ENCODE measurements at regions of chr12 and their contacts with region 1.

Region 1: GRCh38 chr12:108618079-108618952 is 15.4 kb downstream of the SELPLG start:
- DNase-seq: peak; percentile 53 to 87 (median 78)
- ATAC-seq: peak; percentile 35
- H3K4me3 ChIP-seq: no peak overlapping the region
- H3K4me3 Mint-ChIP-seq: no peak overlapping the region
- H3K27ac ChIP-seq: peak overlapping the region in 1 of 2 experiments; percentile 71
- H3K27ac Mint-ChIP-seq: peak overlapping the region; percentile 95
- H3K4me1 ChIP-seq: peaks cover 45% of the 10 kb centered on the region
- H3K4me1 Mint-ChIP-seq: peaks cover 61% of the 10 kb centered on the region
- H3K27me3 ChIP-seq: no peaks in the 10 kb centered on the region
- H3K27me3 Mint-ChIP-seq: no peaks in the 10 kb centered on the region
- CTCF ChIP-seq: peak; percentile 96

Region 2: DNA sequence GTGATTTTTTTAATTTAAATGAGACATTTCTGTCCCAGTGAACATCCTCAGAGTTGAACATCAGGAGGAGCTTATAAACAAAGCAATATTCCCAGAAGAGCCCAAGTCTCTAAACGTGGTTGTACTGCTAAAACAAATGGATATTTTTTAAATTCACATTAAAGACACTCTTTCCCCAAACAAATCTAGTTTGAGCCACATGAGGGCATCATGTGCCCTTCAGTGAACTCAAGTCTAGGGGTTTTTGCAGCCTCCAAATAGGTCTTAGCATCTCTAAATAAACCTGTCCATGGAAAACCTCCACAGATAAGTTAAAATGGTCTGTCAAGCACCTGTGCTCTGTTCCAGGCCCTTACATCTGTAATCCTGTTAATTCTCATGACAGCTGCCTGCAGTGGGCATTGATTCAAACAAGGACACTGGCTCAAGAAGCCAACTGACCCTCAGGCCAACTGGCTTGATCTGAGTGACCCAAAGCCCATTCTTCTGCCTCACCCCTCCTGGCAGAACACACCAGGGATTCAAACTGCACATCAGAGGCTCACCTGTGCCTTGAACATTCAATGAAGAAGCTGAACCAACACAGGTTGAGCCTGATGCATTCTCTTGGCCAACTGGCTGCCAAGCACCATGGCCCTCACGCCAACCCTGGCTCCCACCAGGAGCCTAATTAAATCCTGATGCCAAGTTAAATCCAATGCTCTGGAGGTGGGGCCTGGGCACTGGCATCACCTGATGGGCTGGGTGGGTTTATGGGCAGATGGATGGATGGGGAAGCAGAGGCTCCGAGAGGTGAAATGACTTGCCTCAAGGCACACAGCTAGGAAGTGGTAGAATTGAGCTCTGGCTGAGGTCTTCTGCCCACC is 47.3 kb before region 1 on chr12:
- CTCF ChIA-PET with region 1: interaction called, 353 read pairs
- POLR2A ChIA-PET with region 1: interaction called, 105 read pairs
- intact Hi-C with region 1: loop called in 1 of 2 experiments (anchors 1 kb)
- DNase-seq: peak in 3 of 9 experiments; percentile 23 to 54 (median 47)
- ATAC-seq: no peak
- H3K4me3 ChIP-seq: no peak overlapping the region
- H3K4me3 Mint-ChIP-seq: no peak overlapping the region
- H3K27ac ChIP-seq: peak overlapping the region in 1 of 2 experiments; percentile 5
- H3K27ac Mint-ChIP-seq: peak overlapping the region; percentile 97
- H3K4me1 ChIP-seq: peaks cover 53% of the 10 kb centered on the region
- H3K4me1 Mint-ChIP-seq: peaks cover 89% of the 10 kb centered on the region
- H3K27me3 ChIP-seq: no peaks in the 10 kb centered on the region
- H3K27me3 Mint-ChIP-seq: no peaks in the 10 kb centered on the region
- CTCF ChIP-seq: no peak

Region 3: DNA sequence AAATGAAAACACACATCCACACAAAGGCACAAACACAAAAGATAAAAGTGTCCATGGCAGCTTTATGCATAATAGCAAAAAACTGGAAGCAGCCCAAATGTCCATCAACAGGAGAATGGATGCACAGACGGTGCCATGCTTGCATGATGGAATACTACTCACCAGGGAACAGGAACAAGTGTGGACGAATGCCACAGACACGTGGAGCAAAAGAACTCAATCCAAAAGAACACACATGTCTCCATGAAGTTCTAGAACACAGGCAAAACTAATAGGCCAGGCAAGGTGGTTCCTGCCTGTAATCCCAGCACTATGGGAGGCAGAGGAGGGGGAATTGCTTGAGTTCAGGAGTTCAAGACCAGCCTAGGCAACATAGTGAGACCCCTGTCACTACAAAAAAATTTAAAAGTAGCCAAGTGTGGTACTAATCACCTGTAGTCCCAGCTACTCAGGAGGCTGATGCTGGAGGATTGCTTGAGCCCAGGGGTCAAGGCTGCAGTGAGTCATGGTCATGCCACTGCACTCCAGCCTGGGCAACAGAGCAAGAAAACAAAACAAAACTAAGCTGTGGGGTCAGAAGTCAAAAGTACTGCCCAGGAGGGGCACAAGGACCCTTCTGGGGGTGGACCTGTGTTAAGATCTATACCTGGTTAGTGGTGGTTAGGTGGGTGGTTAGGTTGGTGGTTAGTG is 13.2 kb before region 1 on chr12:
- CTCF ChIA-PET with region 1: interaction called, 35 read pairs
- POLR2A ChIA-PET with region 1: no interaction called
- intact Hi-C with region 1: no loop called
- DNase-seq: no peak
- ATAC-seq: no peak
- H3K4me3 ChIP-seq: no peak overlapping the region
- H3K4me3 Mint-ChIP-seq: no peak overlapping the region
- H3K27ac ChIP-seq: no peak overlapping the region
- H3K27ac Mint-ChIP-seq: no peak overlapping the region
- H3K4me1 ChIP-seq: no peaks in the 10 kb centered on the region
- H3K4me1 Mint-ChIP-seq: no peaks in the 10 kb centered on the region
- H3K27me3 ChIP-seq: no peaks in the 10 kb centered on the region
- H3K27me3 Mint-ChIP-seq: no peaks in the 10 kb centered on the region
- CTCF ChIP-seq: no peak

Region 4: DNA sequence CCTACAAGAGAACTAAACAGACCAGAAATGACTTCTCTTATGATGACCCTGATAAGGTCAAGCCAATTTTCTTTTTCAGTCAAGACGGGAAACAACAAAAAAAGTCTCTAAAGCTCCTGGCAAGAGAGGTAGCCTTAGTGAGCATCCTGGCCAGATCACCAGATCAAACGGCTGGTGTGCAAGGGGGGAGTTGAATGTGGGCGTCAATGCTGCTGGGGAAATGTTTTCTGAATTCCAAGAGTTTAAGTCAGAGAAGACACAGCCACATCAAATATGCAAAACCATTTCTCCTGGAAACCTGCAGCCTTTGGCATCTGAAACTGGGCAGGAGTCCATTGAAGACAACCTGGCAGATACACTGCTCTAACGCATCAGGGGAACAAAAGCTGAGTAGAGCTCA is 31.4 kb after region 1 on chr12:
- CTCF ChIA-PET with region 1: interaction called, 39 read pairs
- POLR2A ChIA-PET with region 1: interaction called, 12 read pairs
- intact Hi-C with region 1: loop called in 1 of 2 experiments (anchors 2 kb)
- DNase-seq: no peak
- ATAC-seq: no peak
- H3K4me3 ChIP-seq: no peak overlapping the region
- H3K4me3 Mint-ChIP-seq: no peak overlapping the region
- H3K27ac ChIP-seq: no peak overlapping the region
- H3K27ac Mint-ChIP-seq: no peak overlapping the region
- H3K4me1 ChIP-seq: peaks cover 24% of the 10 kb centered on the region
- H3K4me1 Mint-ChIP-seq: peaks cover 29% of the 10 kb centered on the region
- H3K27me3 ChIP-seq: no peaks in the 10 kb centered on the region
- H3K27me3 Mint-ChIP-seq: no peaks in the 10 kb centered on the region
- CTCF ChIP-seq: no peak

Region 5: DNA sequence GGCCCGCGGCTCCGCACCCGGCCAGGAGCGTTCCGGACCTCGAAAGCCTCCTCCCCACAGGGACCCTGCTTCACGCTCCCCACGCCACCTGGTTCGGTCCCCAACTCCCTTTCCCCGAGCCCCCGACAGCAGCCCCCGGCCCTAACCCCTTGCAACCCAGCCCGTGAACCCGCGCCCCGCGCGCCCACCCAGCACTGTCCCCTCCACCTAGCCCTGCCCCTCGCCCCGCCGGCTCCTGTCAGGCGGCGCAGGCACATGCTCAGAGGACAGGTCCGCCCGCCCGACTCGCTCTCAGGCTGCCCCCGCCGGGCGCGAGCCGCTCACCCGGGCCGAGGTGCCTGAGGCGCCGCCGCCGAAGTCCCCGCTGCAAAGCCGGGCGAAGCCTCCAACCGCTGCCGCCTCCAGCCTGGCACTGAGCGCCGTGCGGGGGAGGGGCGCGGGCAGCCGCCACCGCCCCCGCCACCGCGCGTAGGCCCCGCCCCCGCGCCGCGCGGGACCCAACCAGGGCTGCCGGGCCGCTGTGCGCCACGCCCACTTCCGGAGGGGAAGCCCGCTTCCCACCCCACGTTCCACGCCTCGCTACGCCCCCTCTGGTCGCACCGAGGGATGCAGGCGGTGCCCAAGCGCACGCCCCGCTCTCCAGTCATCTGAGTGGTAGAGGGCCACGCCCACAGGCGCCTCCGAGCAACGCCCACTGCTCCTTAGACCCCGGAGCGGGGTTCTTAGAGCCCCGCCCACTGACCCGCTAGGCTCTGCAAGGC is 113.0 kb after region 1 on chr12 and contains the start of gene CORO1C:
- CTCF ChIA-PET with region 1: interaction called, 6 read pairs
- POLR2A ChIA-PET with region 1: no interaction called
- intact Hi-C with region 1: loop called in 1 of 2 experiments (anchors 5 kb)
- DNase-seq: peak; percentile 86 to 97 (median 92)
- ATAC-seq: peak; percentile 75
- H3K4me3 ChIP-seq: peak within 1 kb of the TSS; percentile 91 to 93
- H3K4me3 Mint-ChIP-seq: peak within 1 kb of the TSS; percentile 94
- H3K27ac ChIP-seq: peak within 1 kb of the TSS; percentile 67 to 85
- H3K27ac Mint-ChIP-seq: peak within 1 kb of the TSS; percentile 86
- H3K4me1 ChIP-seq: peaks cover 7% of the 10 kb centered on the region
- H3K4me1 Mint-ChIP-seq: peaks cover 26% of the 10 kb centered on the region
- H3K27me3 ChIP-seq: no peaks in the 10 kb centered on the region
- H3K27me3 Mint-ChIP-seq: no peaks in the 10 kb centered on the region
- CTCF ChIP-seq: peak; percentile 74
- total RNA-seq, gene CORO1C: 10.3 to 15.4 TPM